Naive thymus-derived CD4-positive, alpha-beta T cell (primary cell): ENCODE measurements at regions of chr1 and their contacts with region 1.

Region 1: DNA sequence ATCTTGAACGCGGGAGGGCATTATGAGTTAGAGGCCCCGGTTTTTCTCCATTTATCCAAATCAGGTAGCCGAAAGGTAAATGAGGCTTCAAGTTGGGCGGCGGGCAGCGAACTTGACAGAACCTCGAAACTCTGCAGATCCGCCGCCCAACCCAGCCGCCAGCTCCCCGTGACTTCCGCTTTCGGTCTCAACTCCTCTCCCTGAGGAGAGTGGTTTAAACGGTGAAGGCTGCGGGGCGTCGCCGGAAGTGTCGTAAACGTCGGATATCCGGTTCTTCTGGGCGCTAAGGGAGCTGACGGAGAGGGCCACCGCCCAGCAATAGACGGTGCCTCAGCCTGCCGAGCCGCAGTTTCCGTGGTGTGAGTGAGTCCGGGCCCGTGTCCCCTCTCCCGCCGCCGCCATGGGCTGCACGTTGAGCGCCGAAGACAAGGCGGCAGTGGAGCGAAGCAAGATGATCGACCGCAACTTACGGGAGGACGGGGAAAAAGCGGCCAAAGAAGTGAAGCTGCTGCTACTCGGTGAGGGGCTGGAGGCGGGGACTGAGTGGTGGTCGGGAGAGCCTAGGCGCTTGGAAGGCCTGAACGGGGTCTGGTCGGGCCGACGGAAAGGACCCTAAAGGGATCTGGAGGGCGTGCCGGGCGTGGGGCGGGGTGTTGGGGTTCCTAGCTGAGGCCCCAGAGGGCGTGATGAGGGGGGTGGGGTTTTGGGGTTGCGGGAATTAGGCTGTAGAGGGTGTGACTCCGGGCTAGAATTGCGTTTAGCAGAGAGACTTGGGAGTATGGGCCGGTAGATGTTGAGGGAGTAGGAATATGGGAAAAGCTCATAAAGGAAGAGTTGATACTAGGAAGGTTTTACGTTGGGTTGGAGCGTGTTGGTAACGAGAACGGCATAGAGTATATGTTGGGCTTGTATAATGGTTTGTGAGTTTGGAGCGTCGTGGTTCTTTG is at the start of gene GNAI3:
- DNase-seq: peak; percentile 78 to 97 (median 95)
- ATAC-seq: peak; percentile 96
- H3K4me3 ChIP-seq: peak within 1 kb of the TSS; percentile 89
- H3K4me3 Mint-ChIP-seq: peak within 1 kb of the TSS; percentile 90 to 99 (median 97)
- H3K27ac ChIP-seq: peak within 1 kb of the TSS; percentile 93
- H3K27ac Mint-ChIP-seq: peak within 1 kb of the TSS; percentile 89 to 100 (median 99)
- H3K4me1 ChIP-seq: peaks cover 25 to 27% of the 10 kb centered on the region in 2 donors
- H3K4me1 Mint-ChIP-seq: peaks cover 30 to 75% (median 55%) of the 10 kb centered on the region in 7 donors
- H3K27me3 ChIP-seq: no peaks in the 10 kb centered on the region
- H3K27me3 Mint-ChIP-seq: no peaks in the 10 kb centered on the region
- total RNA-seq, gene GNAI3: 4.9 to 9.3 (median 7.0) TPM

Region 2: DNA sequence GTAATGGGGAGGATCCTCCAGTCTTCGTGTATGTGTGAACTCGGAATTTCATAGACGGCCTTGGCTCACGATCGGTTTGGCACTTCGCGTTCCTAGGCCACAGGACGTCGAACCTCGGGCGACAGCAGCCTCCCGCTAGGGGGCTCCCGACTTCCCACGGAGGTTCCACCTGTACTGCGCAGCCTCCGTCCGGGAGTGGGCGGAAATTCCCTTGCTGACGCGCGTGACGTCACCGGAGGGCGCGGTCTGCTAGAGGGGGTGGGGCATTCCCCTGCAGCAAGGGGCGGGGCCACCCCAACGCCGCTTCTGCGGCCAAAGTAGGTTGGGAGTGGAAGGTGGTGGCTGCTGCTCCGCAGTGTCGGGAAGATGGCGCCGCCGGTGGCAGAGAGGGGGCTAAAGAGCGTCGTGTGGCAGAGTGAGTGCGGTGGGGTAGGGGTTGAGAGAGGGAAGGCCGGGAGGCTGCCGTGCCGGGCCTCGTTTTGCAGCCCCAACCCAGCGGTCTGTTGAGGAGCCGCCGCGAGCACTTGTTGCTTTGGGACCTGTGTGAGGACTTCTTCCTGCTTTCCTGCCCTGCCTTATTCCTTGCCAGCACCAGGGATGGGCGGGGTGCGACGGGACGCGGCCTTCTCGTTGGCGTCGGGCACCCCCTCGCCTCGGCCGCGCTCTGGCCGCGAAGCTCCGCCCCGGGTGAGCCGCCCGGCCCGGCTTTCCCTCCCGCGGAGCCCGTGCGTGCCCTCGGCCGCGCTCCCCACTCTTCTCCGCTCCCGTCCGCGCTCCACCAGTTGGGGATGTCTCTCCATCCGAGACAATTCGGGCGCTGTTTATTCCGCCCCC is 802.0 kb before region 1 on chr1 and contains the start of gene STXBP3:
- CTCF ChIA-PET with region 1: no interaction called
- POLR2A ChIA-PET with region 1: no interaction called
- intact Hi-C with region 1: loop called in 1 of 2 experiments (anchors 1 kb)
- DNase-seq: peak; percentile 98 to 100 (median 99)
- ATAC-seq: peak; percentile 97
- H3K4me3 ChIP-seq: peak within 1 kb of the TSS; percentile 76
- H3K4me3 Mint-ChIP-seq: peak within 1 kb of the TSS; percentile 90 to 100 (median 97)
- H3K27ac ChIP-seq: peak within 1 kb of the TSS; percentile 98
- H3K27ac Mint-ChIP-seq: peak within 1 kb of the TSS; percentile 93 to 100 (median 98)
- H3K4me1 ChIP-seq: peaks cover 3 to 6% of the 10 kb centered on the region in 2 donors
- H3K4me1 Mint-ChIP-seq: peaks cover 26 to 47% (median 41%) of the 10 kb centered on the region in 7 donors
- H3K27me3 ChIP-seq: no peaks in the 10 kb centered on the region
- H3K27me3 Mint-ChIP-seq: peaks cover 0 to 5% (median 0%) of the 10 kb centered on the region in 5 donors
- total RNA-seq, gene STXBP3: 46.8 to 75.2 (median 54.0) TPM

Region 3: DNA sequence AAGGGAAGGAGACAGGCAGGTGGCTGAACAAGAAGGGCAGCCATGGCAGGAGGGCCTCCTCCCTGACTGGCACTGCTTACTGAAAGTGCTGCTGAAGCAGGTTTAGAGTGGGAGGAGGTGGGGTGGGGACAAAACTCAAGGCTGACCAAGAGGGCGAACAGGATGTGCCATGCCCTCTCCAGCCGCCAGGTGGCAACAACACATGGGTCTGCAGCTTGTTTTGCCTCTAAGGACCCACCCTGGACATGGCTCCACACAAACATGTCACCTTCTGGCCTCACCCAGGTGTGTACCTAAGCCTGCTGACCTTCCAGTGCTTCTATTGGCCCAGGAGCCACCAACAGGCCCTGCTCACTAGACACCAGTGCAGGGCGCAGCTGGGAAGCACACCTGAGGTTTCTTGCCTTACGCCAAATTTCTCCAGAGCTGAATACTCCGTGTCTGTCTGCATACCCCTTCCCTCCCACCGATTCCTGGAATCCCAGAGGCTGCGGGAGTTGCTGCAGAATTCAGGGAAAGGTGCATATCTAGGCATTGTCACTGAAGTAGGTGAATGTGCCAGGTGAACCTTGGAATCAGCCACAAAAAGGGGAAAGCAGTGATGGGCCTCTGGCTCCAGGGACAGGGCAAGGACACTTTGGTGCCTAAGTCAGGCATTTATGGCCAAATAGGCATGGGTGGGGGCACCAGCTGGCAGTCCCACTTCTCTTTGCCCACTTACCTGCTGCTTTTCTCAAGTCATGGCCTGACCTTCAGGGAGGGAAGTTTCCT is 271.0 kb before region 1 on chr1:
- CTCF ChIA-PET with region 1: no interaction called
- POLR2A ChIA-PET with region 1: no interaction called
- intact Hi-C with region 1: no loop called
- DNase-seq: peak in 7 of 9 donors; percentile 20 to 72 (median 35)
- ATAC-seq: peak; percentile 77
- H3K4me3 ChIP-seq: no peak overlapping the region
- H3K4me3 Mint-ChIP-seq: no peak overlapping the region
- H3K27ac ChIP-seq: no peak overlapping the region
- H3K27ac Mint-ChIP-seq: peak overlapping the region in 1 of 9 donors; percentile 44
- H3K4me1 ChIP-seq: peaks cover 3% of the 10 kb centered on the region in 2 donors
- H3K4me1 Mint-ChIP-seq: peaks cover 0 to 26% (median 10%) of the 10 kb centered on the region in 7 donors
- H3K27me3 ChIP-seq: no peaks in the 10 kb centered on the region
- H3K27me3 Mint-ChIP-seq: no peaks in the 10 kb centered on the region

Region 4: GRCh38 chr1:109426278-109427170 is 122.1 kb before region 1 on chr1 and contains the start of gene PSMA5:
- CTCF ChIA-PET with region 1: interaction called, 5 read pairs
- POLR2A ChIA-PET with region 1: interaction called, 10 read pairs
- intact Hi-C with region 1: loop called (anchors 1 kb)
- DNase-seq: peak; percentile 73 to 97 (median 95)
- ATAC-seq: peak; percentile 96
- H3K4me3 ChIP-seq: peak within 1 kb of the TSS; percentile 77
- H3K4me3 Mint-ChIP-seq: peak within 1 kb of the TSS; percentile 95 to 99 (median 98)
- H3K27ac ChIP-seq: peak within 1 kb of the TSS; percentile 91
- H3K27ac Mint-ChIP-seq: peak within 1 kb of the TSS; percentile 80 to 99 (median 98)
- H3K4me1 ChIP-seq: peaks cover 27 to 29% of the 10 kb centered on the region in 2 donors
- H3K4me1 Mint-ChIP-seq: peaks cover 29 to 46% (median 34%) of the 10 kb centered on the region in 7 donors
- H3K27me3 ChIP-seq: no peaks in the 10 kb centered on the region
- H3K27me3 Mint-ChIP-seq: no peaks in the 10 kb centered on the region
- total RNA-seq, gene PSMA5: 38.3 to 203 (median 70.7) TPM

Region 5: DNA sequence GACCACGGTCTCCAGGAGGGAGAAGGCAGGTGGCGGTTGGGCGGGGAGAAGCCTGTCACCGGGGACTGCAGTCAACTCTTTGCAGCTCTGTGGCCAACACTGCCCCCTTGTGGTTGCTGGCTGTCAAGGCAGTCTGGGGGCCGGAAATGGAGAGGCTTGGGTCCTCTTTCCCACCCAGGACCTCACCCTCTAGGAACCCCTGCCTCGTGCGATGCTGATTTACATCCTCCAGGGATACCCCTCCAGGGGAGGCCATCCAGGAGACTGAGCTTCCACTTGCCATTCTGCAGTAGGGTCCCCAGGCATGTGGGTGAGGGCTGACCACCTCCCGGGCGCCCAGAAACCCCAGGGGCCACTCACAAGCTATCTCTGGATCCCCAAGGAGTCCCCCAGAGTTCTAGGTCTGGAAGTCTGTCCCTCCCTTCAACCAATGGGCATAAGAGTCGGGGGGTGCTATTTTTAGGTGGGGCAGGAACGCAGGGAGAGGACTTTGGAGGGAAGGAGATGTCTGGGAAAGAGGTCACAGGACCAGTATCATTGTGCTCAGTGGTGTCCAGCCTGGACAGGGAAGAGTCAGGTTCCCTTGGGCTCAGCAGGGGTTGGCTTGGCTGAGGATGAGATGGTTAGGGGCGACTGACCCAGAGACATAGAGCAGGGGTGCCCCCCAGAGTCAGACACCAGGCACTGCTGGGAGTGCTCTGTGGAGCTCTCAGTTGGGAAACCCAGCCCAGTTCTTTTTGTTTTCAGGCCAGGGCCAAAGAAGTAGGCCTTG is 16.0 kb before region 1 on chr1:
- CTCF ChIA-PET with region 1: interaction called, 13 read pairs
- POLR2A ChIA-PET with region 1: interaction called, 6 read pairs
- intact Hi-C with region 1: no loop called
- DNase-seq: peak; percentile 79 to 96 (median 87)
- ATAC-seq: peak; percentile 94
- H3K4me3 ChIP-seq: peak overlapping the region; percentile 57
- H3K4me3 Mint-ChIP-seq: peak overlapping the region; percentile 78 to 91 (median 86)
- H3K27ac ChIP-seq: no peak overlapping the region
- H3K27ac Mint-ChIP-seq: peak overlapping the region; percentile 66 to 95 (median 86)
- H3K4me1 ChIP-seq: peaks cover 11 to 28% of the 10 kb centered on the region in 2 donors
- H3K4me1 Mint-ChIP-seq: peaks cover 22 to 40% (median 30%) of the 10 kb centered on the region in 7 donors
- H3K27me3 ChIP-seq: no peaks in the 10 kb centered on the region
- H3K27me3 Mint-ChIP-seq: no peaks in the 10 kb centered on the region

Region 6: GRCh38 chr1:109584766-109585165 is 36.2 kb after region 1 on chr1:
- CTCF ChIA-PET with region 1: no interaction called
- POLR2A ChIA-PET with region 1: no interaction called
- intact Hi-C with region 1: no loop called
- DNase-seq: no peak
- ATAC-seq: no peak
- H3K4me3 ChIP-seq: no peak overlapping the region
- H3K4me3 Mint-ChIP-seq: no peak overlapping the region
- H3K27ac ChIP-seq: no peak overlapping the region
- H3K27ac Mint-ChIP-seq: peak overlapping the region in 2 of 9 donors; percentile 7 to 55
- H3K4me1 ChIP-seq: no peaks in the 10 kb centered on the region
- H3K4me1 Mint-ChIP-seq: peaks cover 0 to 12% (median 2%) of the 10 kb centered on the region in 7 donors
- H3K27me3 ChIP-seq: no peaks in the 10 kb centered on the region
- H3K27me3 Mint-ChIP-seq: no peaks in the 10 kb centered on the region

Region 7: GRCh38 chr1:109643385-109644230 is 95.0 kb after region 1 on chr1:
- CTCF ChIA-PET with region 1: interaction called, 84 read pairs
- POLR2A ChIA-PET with region 1: interaction called, 11 read pairs
- intact Hi-C with region 1: loop called (anchors 1 kb)
- DNase-seq: peak; percentile 65 to 91 (median 79)
- ATAC-seq: peak; percentile 94
- H3K4me3 ChIP-seq: no peak overlapping the region
- H3K4me3 Mint-ChIP-seq: no peak overlapping the region
- H3K27ac ChIP-seq: no peak overlapping the region
- H3K27ac Mint-ChIP-seq: peak overlapping the region in 3 of 9 donors; percentile 22 to 81 (median 38)
- H3K4me1 ChIP-seq: peaks cover 6 to 7% of the 10 kb centered on the region in 2 donors
- H3K4me1 Mint-ChIP-seq: peaks cover 3 to 15% (median 5%) of the 10 kb centered on the region in 7 donors
- H3K27me3 ChIP-seq: no peaks in the 10 kb centered on the region
- H3K27me3 Mint-ChIP-seq: peaks cover 0 to 7% (median 0%) of the 10 kb centered on the region in 5 donors

Region 8: GRCh38 chr1:109718491-109718890 is 169.9 kb after region 1 on chr1:
- CTCF ChIA-PET with region 1: no interaction called
- POLR2A ChIA-PET with region 1: no interaction called
- intact Hi-C with region 1: no loop called
- DNase-seq: no peak
- ATAC-seq: no peak
- H3K4me3 ChIP-seq: no peak overlapping the region
- H3K4me3 Mint-ChIP-seq: no peak overlapping the region
- H3K27ac ChIP-seq: no peak overlapping the region
- H3K27ac Mint-ChIP-seq: no peak overlapping the region
- H3K4me1 ChIP-seq: no peaks in the 10 kb centered on the region
- H3K4me1 Mint-ChIP-seq: no peaks in the 10 kb centered on the region
- H3K27me3 ChIP-seq: no peaks in the 10 kb centered on the region
- H3K27me3 Mint-ChIP-seq: peaks cover 14 to 28% (median 17%) of the 10 kb centered on the region in 5 donors

Region 9: DNA sequence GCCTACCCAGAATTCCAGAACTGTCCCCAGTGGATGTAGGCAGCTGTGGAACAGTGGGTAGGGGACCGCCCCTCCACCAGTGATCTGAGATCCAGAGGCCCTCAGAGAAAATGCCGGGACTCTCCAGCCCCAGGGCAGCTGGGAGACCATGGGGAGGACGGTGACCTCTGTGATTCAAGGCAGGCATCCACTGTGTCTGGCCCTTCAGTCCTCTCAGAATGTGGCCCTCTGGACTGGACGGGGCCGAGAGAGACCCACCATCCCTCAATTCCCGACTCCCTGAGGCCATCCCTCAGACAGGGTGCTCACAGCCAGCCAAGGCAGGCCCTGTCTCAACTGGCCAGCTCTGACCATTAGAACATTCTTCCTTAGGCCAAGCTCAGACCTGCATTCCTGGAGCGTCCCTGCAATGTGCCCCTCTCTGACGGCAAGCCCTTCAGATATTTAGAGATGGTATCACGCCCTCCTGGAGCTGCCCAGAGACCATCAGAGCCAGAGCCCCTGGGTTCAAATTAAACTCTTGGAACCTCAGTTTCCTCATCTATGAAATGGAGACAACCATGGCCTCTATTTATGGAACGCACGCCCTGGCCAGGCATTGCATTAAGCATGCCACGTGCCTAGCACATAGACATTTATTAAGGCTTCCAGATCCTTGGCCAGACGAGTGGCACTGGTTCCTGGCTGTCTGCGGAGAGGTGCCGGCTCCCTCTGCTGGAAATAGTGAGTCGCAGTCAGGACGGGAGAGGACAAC is 224.7 kb after region 1 on chr1:
- CTCF ChIA-PET with region 1: interaction called, 81 read pairs
- POLR2A ChIA-PET with region 1: interaction called, 6 read pairs
- intact Hi-C with region 1: no loop called
- DNase-seq: peak; percentile 34 to 79 (median 69)
- ATAC-seq: peak; percentile 87
- H3K4me3 ChIP-seq: no peak overlapping the region
- H3K4me3 Mint-ChIP-seq: no peak overlapping the region
- H3K27ac ChIP-seq: no peak overlapping the region
- H3K27ac Mint-ChIP-seq: peak overlapping the region in 1 of 9 donors; percentile 73
- H3K4me1 ChIP-seq: peaks cover 0 to 4% of the 10 kb centered on the region in 2 donors
- H3K4me1 Mint-ChIP-seq: peaks cover 0 to 21% (median 6%) of the 10 kb centered on the region in 7 donors
- H3K27me3 ChIP-seq: no peaks in the 10 kb centered on the region
- H3K27me3 Mint-ChIP-seq: peaks cover 0 to 12% (median 5%) of the 10 kb centered on the region in 5 donors

Region 10: DNA sequence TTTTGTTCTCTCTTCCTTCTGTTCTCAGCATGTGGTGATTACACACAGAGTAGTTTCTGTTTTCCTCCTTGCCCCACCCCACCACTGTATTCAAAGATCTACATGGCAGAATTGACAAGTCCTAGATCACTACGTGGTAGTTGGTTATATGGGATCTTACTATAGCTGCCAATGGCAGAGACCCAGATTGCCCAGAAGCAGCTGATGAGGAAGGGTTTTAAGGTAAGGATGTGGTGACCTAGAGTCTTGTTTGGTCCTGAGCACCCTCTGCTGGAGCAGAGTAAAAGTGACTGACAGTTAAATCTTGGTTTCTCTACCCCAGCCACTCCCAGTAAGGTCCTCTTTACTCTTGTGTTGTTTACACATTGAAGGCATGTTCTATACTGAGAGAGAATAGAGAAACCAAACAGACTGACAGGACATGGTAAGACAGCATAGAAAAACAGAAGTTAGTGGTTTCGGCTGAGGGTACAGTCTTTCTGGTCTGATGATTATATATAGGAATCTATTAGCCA is 463.0 kb after region 1 on chr1:
- CTCF ChIA-PET with region 1: no interaction called
- POLR2A ChIA-PET with region 1: no interaction called
- intact Hi-C with region 1: loop called in 1 of 2 experiments (anchors 1 kb)
- DNase-seq: peak in 6 of 9 donors; percentile 19 to 49 (median 38)
- ATAC-seq: peak; percentile 96
- H3K4me3 ChIP-seq: no peak overlapping the region
- H3K4me3 Mint-ChIP-seq: no peak overlapping the region
- H3K27ac ChIP-seq: no peak overlapping the region
- H3K27ac Mint-ChIP-seq: peak overlapping the region in 3 of 9 donors; percentile 17 to 73 (median 56)
- H3K4me1 ChIP-seq: no peaks in the 10 kb centered on the region
- H3K4me1 Mint-ChIP-seq: peaks cover 2 to 13% (median 4%) of the 10 kb centered on the region in 7 donors
- H3K27me3 ChIP-seq: no peaks in the 10 kb centered on the region
- H3K27me3 Mint-ChIP-seq: no peaks in the 10 kb centered on the region